Panc1 (cell line): ENCODE measurements at regions of chr2 and their contacts with region 1.

Region 1: DNA sequence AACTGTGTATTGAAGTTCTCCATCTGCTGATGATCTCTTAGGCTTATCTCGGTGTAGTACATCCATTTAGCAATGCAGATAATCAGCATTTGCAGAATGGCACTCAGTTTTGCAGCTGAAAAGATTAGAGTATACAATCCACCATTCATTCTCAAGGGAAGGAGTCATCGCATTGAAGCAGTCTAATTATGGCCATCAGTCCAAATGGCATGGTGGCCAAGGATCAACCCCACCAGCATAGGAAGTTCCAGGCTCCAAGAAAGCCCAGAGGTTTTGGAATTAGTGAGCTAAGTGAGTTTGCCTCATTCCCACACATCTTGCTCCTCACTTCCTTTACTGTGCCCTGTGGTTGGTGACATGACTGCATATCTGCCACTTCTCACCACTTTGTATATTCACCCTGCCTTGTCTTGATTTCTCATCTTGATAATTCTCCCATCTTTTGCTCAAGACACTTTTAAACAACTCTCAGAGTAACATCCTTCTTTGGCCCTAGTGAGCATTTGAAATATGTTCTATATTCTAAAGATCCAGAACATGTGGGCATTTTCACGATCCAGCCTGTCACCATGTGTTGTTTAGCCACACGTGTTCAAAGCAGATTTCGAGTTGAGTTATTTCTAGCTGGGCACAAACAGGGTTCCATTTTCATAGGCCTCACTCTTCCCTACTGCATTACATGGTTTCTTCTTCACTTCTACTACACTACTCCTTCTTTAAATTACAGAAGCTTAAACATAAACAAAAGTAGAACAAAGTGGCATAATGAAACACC is 1119.8 kb downstream of the TSN start:
- DNase-seq: no peak
- ATAC-seq: no peak
- H3K4me3 ChIP-seq: no peak overlapping the region
- H3K27ac ChIP-seq: no peak overlapping the region
- H3K4me1 ChIP-seq: no peaks in the 10 kb centered on the region
- H3K27me3 ChIP-seq: no peaks in the 10 kb centered on the region
- CTCF ChIP-seq: no peak

Region 2: GRCh38 chr2:122707224-122707824 is 168.0 kb before region 1 on chr2:
- CTCF ChIA-PET with region 1: no interaction called
- POLR2A ChIA-PET with region 1: no interaction called
- in situ Hi-C with region 1: no loop called
- intact Hi-C with region 1: no loop called
- DNase-seq: no peak
- ATAC-seq: no peak
- H3K4me3 ChIP-seq: no peak overlapping the region
- H3K27ac ChIP-seq: no peak overlapping the region
- H3K4me1 ChIP-seq: no peaks in the 10 kb centered on the region
- H3K27me3 ChIP-seq: no peaks in the 10 kb centered on the region
- CTCF ChIP-seq: no peak

Region 3: GRCh38 chr2:122908159-122908558 is 32.9 kb after region 1 on chr2:
- CTCF ChIA-PET with region 1: interaction called, 11 read pairs
- POLR2A ChIA-PET with region 1: no interaction called
- in situ Hi-C with region 1: no loop called
- intact Hi-C with region 1: no loop called
- DNase-seq: no peak
- ATAC-seq: no peak
- H3K4me3 ChIP-seq: no peak overlapping the region
- H3K27ac ChIP-seq: no peak overlapping the region
- H3K4me1 ChIP-seq: no peaks in the 10 kb centered on the region
- H3K27me3 ChIP-seq: no peaks in the 10 kb centered on the region
- CTCF ChIP-seq: no peak

Region 4: GRCh38 chr2:124193706-124194105 is 1318.4 kb after region 1 on chr2:
- CTCF ChIA-PET with region 1: no interaction called
- POLR2A ChIA-PET with region 1: no interaction called
- in situ Hi-C with region 1: no loop called
- intact Hi-C with region 1: no loop called
- DNase-seq: no peak
- ATAC-seq: no peak
- H3K4me3 ChIP-seq: no peak overlapping the region
- H3K27ac ChIP-seq: no peak overlapping the region
- H3K4me1 ChIP-seq: no peaks in the 10 kb centered on the region
- H3K27me3 ChIP-seq: no peaks in the 10 kb centered on the region
- CTCF ChIP-seq: no peak